Common myeloid progenitor, CD34-positive (primary cell): ENCODE measurements at regions of chr16 and their contacts with region 1.

Region 1: DNA sequence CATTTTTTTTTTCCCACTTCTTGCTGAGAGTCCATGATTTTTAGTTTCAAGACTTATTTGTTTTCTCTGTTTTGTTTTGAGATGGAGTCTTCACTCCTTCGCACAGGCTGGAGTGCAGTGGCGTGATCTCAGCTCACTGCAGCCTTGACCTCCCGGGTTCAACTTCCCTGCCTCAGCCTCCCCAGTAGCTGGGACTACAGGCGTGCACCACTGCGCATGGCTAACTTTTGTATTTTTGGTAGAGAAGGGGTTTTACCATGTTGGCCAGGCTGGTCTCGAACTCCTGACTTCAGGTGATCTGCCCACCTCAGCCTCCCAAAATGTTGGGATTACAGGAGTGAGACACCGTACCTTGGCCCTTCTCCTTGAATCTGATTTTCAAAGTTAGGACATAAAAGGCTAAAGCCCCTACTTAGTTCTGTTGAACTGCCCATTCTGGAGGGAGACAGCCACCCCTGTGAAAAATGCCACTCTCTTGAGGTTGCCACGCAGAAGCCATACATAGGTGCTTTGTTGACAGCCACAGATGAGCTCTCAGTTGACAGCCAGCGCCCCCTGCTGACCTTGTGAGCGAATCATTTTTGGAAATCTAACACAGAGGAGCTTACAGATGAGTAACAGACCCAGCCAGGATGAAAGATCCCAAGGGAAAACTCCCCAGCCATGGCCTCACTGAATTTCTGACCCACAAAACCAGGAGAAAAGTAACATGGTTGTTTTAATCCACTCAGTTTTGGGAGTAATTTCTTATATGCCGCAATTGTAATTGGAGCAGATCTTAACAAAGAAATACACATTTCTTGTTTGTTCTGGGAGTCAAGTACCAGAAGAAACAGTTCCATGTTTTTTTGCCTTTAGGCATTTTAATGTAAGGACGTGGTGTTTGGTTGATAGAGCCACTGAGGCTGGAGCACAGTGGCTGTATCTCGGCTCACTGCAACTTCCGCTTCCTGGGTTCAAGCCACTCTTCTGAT is 38.8 kb downstream of the PKD1L3 start:
- DNase-seq: peak; percentile 79 to 88 (median 84)
- H3K4me3 ChIP-seq: no peak overlapping the region
- H3K27ac ChIP-seq: no peak overlapping the region
- H3K4me1 ChIP-seq: peaks cover 0 to 3% (median 0%) of the 10 kb centered on the region in 4 experiments
- H3K27me3 ChIP-seq: no peaks in the 10 kb centered on the region

Region 2: GRCh38 chr16:71867939-71868338 is 93.4 kb before region 1 on chr16:
- CTCF ChIA-PET with region 1: no interaction called
- POLR2A ChIA-PET with region 1: no interaction called
- DNase-seq: no peak
- H3K4me3 ChIP-seq: no peak overlapping the region
- H3K27ac ChIP-seq: no peak overlapping the region
- H3K4me1 ChIP-seq: no peaks in the 10 kb centered on the region
- H3K27me3 ChIP-seq: no peaks in the 10 kb centered on the region

Region 3: GRCh38 chr16:71973001-71973400 is 11.6 kb after region 1 on chr16:
- CTCF ChIA-PET with region 1: interaction called, 10 read pairs
- POLR2A ChIA-PET with region 1: no interaction called
- DNase-seq: no peak
- H3K4me3 ChIP-seq: no peak overlapping the region
- H3K27ac ChIP-seq: no peak overlapping the region
- H3K4me1 ChIP-seq: no peaks in the 10 kb centered on the region
- H3K27me3 ChIP-seq: no peaks in the 10 kb centered on the region